ENCODE measurements at regions of chr5 and their contacts with region 1.

Region 1: DNA sequence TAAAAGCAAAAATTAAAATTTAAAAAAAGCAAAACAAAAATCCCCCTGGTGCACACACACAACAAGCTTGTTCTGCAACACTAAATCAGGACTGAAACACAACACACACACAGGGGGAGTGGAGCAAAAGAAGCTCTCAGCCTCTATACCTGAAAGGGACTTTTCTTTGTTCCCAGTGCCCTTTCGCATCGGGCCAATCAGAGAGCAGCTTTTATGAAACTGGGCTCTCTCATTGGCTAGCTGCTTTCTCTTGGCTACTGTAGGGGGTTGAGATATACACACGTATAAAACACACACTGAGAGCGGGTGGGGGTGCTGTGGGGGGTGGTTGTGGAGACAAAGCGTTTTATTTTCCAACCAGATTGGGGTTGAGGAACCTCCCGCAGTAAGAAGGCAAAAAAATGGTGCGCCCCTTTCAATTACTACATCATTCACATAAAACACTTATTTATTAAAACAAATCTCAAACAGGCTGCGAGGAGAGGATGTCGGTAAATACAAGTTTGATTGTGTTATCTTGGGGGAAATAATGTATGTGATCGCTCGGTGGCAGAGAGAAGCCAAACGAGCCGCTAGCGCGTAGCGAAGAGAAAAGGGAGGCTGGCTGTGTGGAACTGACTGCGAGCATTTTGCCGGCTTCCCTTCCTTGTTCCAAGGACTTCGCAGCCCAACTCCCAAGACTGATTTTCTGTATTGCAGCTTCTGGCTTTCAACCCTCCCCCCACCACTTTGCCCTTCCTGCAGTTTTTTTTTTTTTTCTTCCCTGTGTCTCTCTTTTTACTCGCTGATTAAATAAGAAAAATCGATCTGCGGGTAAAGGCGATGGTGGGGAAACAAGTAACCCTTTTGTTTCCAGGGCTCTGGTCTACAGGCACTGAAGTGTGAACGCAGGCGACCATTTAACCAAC is 2.5 kb upstream of the ZNF608 start:
- DNase-seq: peak; percentile 59
- ATAC-seq: peak; percentile 89

Region 2: GRCh38 chr5:124902097-124902821 is 153.3 kb after region 1 on chr5:
- intact Hi-C with region 1: loop called (anchors 2 kb)
- DNase-seq: no peak
- ATAC-seq: no peak

Region 3: DNA sequence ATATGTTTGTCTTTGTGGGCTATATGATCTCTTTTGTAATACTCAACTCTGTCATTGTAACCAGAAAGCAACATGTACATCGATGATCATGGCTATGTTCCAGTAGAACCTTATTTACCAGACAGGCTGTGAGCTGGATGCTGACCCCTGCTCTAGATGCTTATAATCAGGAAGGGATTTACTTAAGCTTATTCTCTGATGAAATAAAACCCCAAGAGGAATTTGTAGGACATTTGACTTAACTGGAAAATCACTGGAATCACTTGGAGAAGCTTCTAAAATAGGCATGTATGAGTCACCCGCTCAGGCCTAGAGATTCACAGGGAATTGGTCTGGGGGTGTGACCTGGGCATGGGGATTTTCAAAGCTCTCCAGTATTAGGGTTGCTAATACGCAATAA is 283.3 kb after region 1 on chr5:
- intact Hi-C with region 1: no loop called
- DNase-seq: no peak
- ATAC-seq: no peak